Lower leg skin (tissue), 4 donors: ENCODE measurements at regions of chr21 and their contacts with region 1.

Region 1: DNA sequence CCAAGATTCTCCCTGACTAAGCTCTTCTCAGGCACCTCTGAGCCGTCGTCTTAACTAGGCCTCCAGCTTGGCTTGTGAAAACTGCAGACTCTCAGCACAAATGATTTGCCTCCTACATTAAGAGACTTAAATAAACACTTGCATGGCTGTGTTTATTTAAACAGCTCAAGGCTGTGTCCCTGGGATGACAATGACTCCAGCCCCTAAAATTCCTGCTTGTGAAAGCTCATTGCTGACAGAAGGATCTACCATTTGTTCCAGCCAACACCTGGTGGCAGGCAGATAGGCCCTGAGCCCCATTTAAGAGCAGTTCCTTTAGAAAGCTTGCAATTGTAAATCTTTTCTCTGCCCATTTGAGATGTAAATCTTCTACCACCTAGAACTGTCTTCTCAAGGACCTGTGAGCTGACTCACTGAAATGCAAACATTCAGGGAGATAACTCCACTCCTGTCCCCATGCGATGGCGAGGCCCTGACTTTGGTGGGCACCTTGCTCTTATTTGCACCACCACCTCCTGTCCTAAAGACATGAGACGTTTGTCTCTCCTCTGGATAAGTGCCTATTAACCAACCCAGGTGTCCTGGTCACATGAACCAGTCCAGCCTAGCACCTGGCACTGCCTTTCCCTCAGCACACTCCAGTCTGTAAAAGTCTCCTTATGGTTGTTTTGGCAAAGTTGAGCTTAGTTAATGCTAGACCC is 15.1 kb upstream of the PCP4 start:
- DNase-seq: no peak
- H3K4me3 ChIP-seq: no peak overlapping the region
- CTCF ChIP-seq: no peak
- POLR2A ChIP-seq: no peak

Region 2: GRCh38 chr21:39776589-39776988 is 75.6 kb before region 1 on chr21:
- intact Hi-C with region 1: loop called (anchors 10 kb)
- DNase-seq: no peak
- H3K4me3 ChIP-seq: no peak overlapping the region
- CTCF ChIP-seq: no peak
- POLR2A ChIP-seq: no peak

Region 3: GRCh38 chr21:39882151-39882838 is 30.1 kb after region 1 on chr21:
- intact Hi-C with region 1: no loop called
- DNase-seq: no peak
- H3K4me3 ChIP-seq: no peak overlapping the region
- CTCF ChIP-seq: no peak
- POLR2A ChIP-seq: no peak